ENCODE measurements at regions of chr12 and their contacts with region 1.

Region 1: GRCh38 chr12:3988519-3989448 is 115.6 kb upstream of the PARP11 start:
- DNase-seq: no peak
- ATAC-seq: no peak
- H3K4me3 ChIP-seq: no peak overlapping the region
- H3K27ac ChIP-seq: no peak overlapping the region
- H3K4me1 ChIP-seq: no peaks in the 10 kb centered on the region
- CTCF ChIP-seq: no peak
- EP300 ChIP-seq: no peak
- POLR2A ChIP-seq: no peak
- RAD21 ChIP-seq: no peak

Region 2: DNA sequence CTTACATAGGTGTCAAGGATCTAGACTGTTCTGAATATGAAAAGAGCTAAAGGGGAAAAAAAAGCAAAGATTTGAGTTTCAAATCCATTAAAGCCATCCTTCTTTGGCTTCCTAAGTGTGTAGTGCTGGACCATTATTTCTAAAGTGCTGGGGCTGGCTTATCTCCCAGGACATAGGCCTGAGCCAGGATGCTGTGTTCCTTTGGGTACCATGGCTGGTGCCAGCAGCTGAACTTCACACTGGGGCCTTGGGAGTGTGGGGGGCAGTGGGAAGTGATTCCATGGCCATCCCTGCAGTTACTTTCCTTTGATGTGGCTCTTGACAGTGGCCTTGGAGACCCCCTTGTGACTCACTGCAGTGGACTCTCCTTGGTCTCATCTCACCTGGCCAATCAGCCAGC is 477.0 kb before region 1 on chr12:
- CTCF ChIA-PET with region 1: no interaction called
- POLR2A ChIA-PET with region 1: no interaction called
- DNase-seq: no peak
- ATAC-seq: no peak
- H3K4me3 ChIP-seq: no peak overlapping the region
- H3K27ac ChIP-seq: no peak overlapping the region
- H3K4me1 ChIP-seq: no peaks in the 10 kb centered on the region
- CTCF ChIP-seq: no peak
- EP300 ChIP-seq: no peak
- POLR2A ChIP-seq: no peak
- RAD21 ChIP-seq: no peak

Region 3: GRCh38 chr12:4030929-4031702 is 42.3 kb after region 1 on chr12:
- CTCF ChIA-PET with region 1: interaction called, 338 read pairs
- POLR2A ChIA-PET with region 1: no interaction called
- DNase-seq: peak; percentile 95 to 96
- ATAC-seq: peak; percentile 98 to 99
- H3K4me3 ChIP-seq: peak overlapping the region; percentile 35
- H3K27ac ChIP-seq: peak overlapping the region; percentile 78 to 93
- H3K4me1 ChIP-seq: peaks cover 21% of the 10 kb centered on the region
- CTCF ChIP-seq: no peak
- EP300 ChIP-seq: peak; percentile 34 to 56; a peak in 2 of 5 replicates
- POLR2A ChIP-seq: peak; percentile 28; the same call in 1 of the 2 replicates
- RAD21 ChIP-seq: no peak

Region 4: DNA sequence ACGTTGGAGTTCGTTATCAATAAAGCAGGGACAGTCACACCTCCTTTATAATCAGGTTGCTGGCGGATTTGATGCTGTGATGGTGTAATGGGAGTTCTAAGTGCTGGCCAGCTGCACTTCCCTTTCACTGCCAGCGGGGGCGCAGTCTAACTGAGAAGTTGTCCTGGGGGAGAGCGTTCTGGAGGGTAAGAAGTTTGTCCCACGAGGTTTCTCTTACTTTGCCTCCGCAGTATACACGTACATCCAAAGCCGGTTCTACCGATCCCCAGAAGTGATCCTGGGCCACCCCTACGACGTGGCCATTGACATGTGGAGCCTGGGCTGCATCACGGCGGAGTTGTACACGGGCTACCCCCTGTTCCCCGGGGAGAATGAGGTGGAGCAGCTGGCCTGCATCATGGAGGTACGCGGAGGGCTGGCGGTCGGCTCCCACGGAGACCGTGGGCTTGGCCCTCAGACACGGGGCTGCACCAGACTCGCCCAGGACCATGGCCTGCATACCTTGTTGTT is 616.0 kb after region 1 on chr12:
- CTCF ChIA-PET with region 1: no interaction called
- POLR2A ChIA-PET with region 1: no interaction called
- DNase-seq: peak; percentile 80 to 93
- ATAC-seq: peak; percentile 96 to 98
- H3K4me3 ChIP-seq: peak overlapping the region; percentile 83
- H3K27ac ChIP-seq: peak overlapping the region; percentile 81 to 89
- H3K4me1 ChIP-seq: peaks cover 5% of the 10 kb centered on the region; the same call in 1 of the 3 replicates
- CTCF ChIP-seq: peak; percentile 71
- EP300 ChIP-seq: no peak
- POLR2A ChIP-seq: peak; percentile 67
- RAD21 ChIP-seq: peak; percentile 45 to 62; a peak in 4 of 5 replicates

Measured in A549 (cell line).